ENCODE measurements at regions of chr9 and their contacts with region 1.

Region 1: GRCh38 chr9:34899535-34900158 is 58.4 kb upstream of the PHF24 start:
- DNase-seq: peak; percentile 54 to 74
- ATAC-seq: peak; percentile 100
- H3K4me3 ChIP-seq: no peak overlapping the region
- H3K27ac ChIP-seq: no peak overlapping the region
- H3K4me1 ChIP-seq: no peaks in the 10 kb centered on the region
- H3K27me3 ChIP-seq: peaks cover 5 to 10% (median 9%) of the 10 kb centered on the region in 3 donors
- CTCF ChIP-seq: peak; percentile 83 to 86 (median 83)
- POLR2A ChIP-seq: no peak

Region 2: GRCh38 chr9:34989003-34989945 is 89.6 kb after region 1 on chr9 and contains the start of gene DNAJB5:
- in situ Hi-C with region 1: loop called in 1 of 4 experiments (anchors 5 kb)
- intact Hi-C with region 1: loop called (anchors 1 kb)
- DNase-seq: peak; percentile 99 to 100
- ATAC-seq: peak; percentile 47 to 51
- H3K4me3 ChIP-seq: peak within 1 kb of the TSS; percentile 80 to 91 (median 89)
- H3K27ac ChIP-seq: peak within 1 kb of the TSS in 3 of 4 donors; percentile 85 to 93 (median 89)
- H3K4me1 ChIP-seq: peaks cover 27 to 28% of the 10 kb centered on the region in 2 donors
- H3K27me3 ChIP-seq: no peaks in the 10 kb centered on the region
- CTCF ChIP-seq: no peak
- POLR2A ChIP-seq: no peak
- total RNA-seq, gene DNAJB5: 75.3 to 187 (median 128) TPM

Region 3: GRCh38 chr9:35096035-35096849 is 196.6 kb after region 1 on chr9 and contains the start of gene PIGO:
- in situ Hi-C with region 1: loop called in 2 of 4 experiments (anchors 5 to 10 kb)
- intact Hi-C with region 1: loop called (anchors 1 kb)
- DNase-seq: peak; percentile 81 to 84
- ATAC-seq: peak; percentile 91 to 92
- H3K4me3 ChIP-seq: peak within 1 kb of the TSS; percentile 82 to 99 (median 83)
- H3K27ac ChIP-seq: peak within 1 kb of the TSS; percentile 89 to 99 (median 92)
- H3K4me1 ChIP-seq: peaks cover 6 to 14% of the 10 kb centered on the region in 2 donors
- H3K27me3 ChIP-seq: no peaks in the 10 kb centered on the region
- CTCF ChIP-seq: peak; percentile 77 to 94 (median 79)
- POLR2A ChIP-seq: peak; percentile 22 to 39
- total RNA-seq, gene PIGO: 6.6 to 12.3 (median 7.3) TPM

Region 4: DNA sequence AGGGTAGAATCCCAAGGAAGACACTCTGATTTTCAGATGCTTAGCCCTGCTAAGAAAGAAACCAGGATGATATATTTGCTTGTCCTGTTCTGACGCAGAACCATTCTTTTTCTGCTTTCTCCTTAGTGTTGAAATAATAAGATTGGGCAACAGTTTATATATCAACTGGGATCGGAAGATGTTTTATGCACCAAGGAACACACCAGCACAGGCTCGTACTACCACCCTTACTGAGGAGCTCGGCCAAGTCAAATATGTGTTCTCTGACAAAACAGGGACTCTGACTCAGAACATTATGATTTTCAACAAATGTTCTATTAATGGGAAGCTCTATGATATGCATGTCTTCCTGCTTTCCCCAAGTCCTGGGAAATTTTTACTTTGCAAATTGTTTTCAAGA is 571.2 kb after region 1 on chr9:
- in situ Hi-C with region 1: loop called in 2 of 4 experiments (anchors 25 kb)
- intact Hi-C with region 1: loop called (anchors 2 kb)
- DNase-seq: no peak
- ATAC-seq: no peak
- H3K4me3 ChIP-seq: no peak overlapping the region
- H3K27ac ChIP-seq: no peak overlapping the region
- H3K4me1 ChIP-seq: no peaks in the 10 kb centered on the region
- H3K27me3 ChIP-seq: no peaks in the 10 kb centered on the region
- CTCF ChIP-seq: no peak
- POLR2A ChIP-seq: no peak

Measured in gastrocnemius medialis (tissue), 4 donors.